ENCODE measurements at regions of chr15 and their contacts with region 1.

Region 1: GRCh38 chr15:52005748-52006701 is 13.0 kb upstream of the MAPK6 start:
- DNase-seq: peak; percentile 60
- H3K4me3 Mint-ChIP-seq: no peak overlapping the region
- H3K27ac Mint-ChIP-seq: peak overlapping the region; percentile 69
- H3K4me1 Mint-ChIP-seq: peaks cover 63% of the 10 kb centered on the region
- H3K27me3 Mint-ChIP-seq: no peaks in the 10 kb centered on the region

Region 2: GRCh38 chr15:51425517-51426367 is 580.3 kb before region 1 on chr15:
- CTCF ChIA-PET with region 1: no interaction called
- POLR2A ChIA-PET with region 1: no interaction called
- intact Hi-C with region 1: no loop called
- DNase-seq: no peak
- H3K4me3 Mint-ChIP-seq: no peak overlapping the region
- H3K27ac Mint-ChIP-seq: no peak overlapping the region
- H3K4me1 Mint-ChIP-seq: no peaks in the 10 kb centered on the region
- H3K27me3 Mint-ChIP-seq: peaks cover 3% of the 10 kb centered on the region

Region 3: DNA sequence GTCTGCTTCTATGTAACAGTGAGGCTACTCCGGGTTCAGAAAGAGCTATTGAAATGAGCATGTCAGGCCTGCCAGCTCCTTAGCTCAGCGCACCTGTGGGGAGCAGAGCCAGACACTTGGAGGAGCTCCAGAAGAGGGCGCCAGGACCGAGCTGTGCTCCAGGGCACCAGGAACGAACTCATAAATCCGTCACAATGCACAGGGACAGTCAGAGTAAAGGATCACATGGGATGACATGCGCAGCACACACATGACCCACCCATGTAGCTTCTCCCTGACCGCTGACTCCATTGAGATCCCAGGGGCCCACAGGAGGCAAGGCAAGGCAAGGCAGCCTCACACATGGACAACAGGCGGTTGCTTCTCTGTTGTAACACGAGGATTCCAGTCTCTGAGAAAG is 211.2 kb after region 1 on chr15:
- CTCF ChIA-PET with region 1: no interaction called
- POLR2A ChIA-PET with region 1: no interaction called
- intact Hi-C with region 1: loop called (anchors 5 kb)
- DNase-seq: peak; percentile 55
- H3K4me3 Mint-ChIP-seq: no peak overlapping the region
- H3K27ac Mint-ChIP-seq: no peak overlapping the region
- H3K4me1 Mint-ChIP-seq: peaks cover 15% of the 10 kb centered on the region
- H3K27me3 Mint-ChIP-seq: no peaks in the 10 kb centered on the region

Measured in activated CD4-positive, alpha-beta memory T cell treated with anti-CD3 and anti-CD28 coated beads for 36 hours (primary cell).